ENCODE measurements at regions of chr6 and their contacts with region 1.

Region 1: GRCh38 chr6:30212865-30213666 is at the start of gene TRIM26:
- DNase-seq: peak; percentile 99
- ATAC-seq: peak; percentile 87
- H3K4me3 ChIP-seq: peak within 1 kb of the TSS; percentile 93 to 100 (median 98)
- H3K4me3 Mint-ChIP-seq: peak within 1 kb of the TSS; percentile 90
- H3K27ac ChIP-seq: peak within 1 kb of the TSS; percentile 98 to 100
- H3K27ac Mint-ChIP-seq: peak within 1 kb of the TSS; percentile 100
- H3K4me1 ChIP-seq: peaks cover 40 to 47% of the 10 kb centered on the region in 2 donors
- H3K4me1 Mint-ChIP-seq: peaks cover 59% of the 10 kb centered on the region
- H3K27me3 ChIP-seq: no peaks in the 10 kb centered on the region
- H3K27me3 Mint-ChIP-seq: no peaks in the 10 kb centered on the region
- CTCF ChIP-seq: no peak
- total RNA-seq, gene TRIM26: 65.3 and 73.2 TPM in 2 replicates

Region 2: GRCh38 chr6:30066577-30067459 is 146.2 kb before region 1 on chr6 and contains the start of gene PPP1R11:
- CTCF ChIA-PET with region 1: no interaction called
- POLR2A ChIA-PET with region 1: interaction called, 5 read pairs
- intact Hi-C with region 1: loop called (anchors 2 kb)
- DNase-seq: peak; percentile 100
- ATAC-seq: peak; percentile 97
- H3K4me3 ChIP-seq: peak within 1 kb of the TSS; percentile 80 to 95 (median 85)
- H3K4me3 Mint-ChIP-seq: peak within 1 kb of the TSS; percentile 93
- H3K27ac ChIP-seq: peak within 1 kb of the TSS; percentile 93 to 97
- H3K27ac Mint-ChIP-seq: peak within 1 kb of the TSS; percentile 99
- H3K4me1 ChIP-seq: peaks cover 42 to 45% of the 10 kb centered on the region in 2 donors
- H3K4me1 Mint-ChIP-seq: peaks cover 51% of the 10 kb centered on the region
- H3K27me3 ChIP-seq: peaks cover 0 to 20% (median 9%) of the 10 kb centered on the region in 4 experiments
- H3K27me3 Mint-ChIP-seq: peaks cover 17% of the 10 kb centered on the region
- CTCF ChIP-seq: no peak
- total RNA-seq, gene PPP1R11: 44.8 and 49.5 TPM in 2 replicates

Region 3: GRCh38 chr6:30200551-30201281 is 12.3 kb before region 1 on chr6:
- CTCF ChIA-PET with region 1: interaction called, 3 read pairs
- POLR2A ChIA-PET with region 1: interaction called, 4 read pairs
- intact Hi-C with region 1: loop called (anchors 1 kb)
- DNase-seq: peak; percentile 79
- ATAC-seq: peak; percentile 88
- H3K4me3 ChIP-seq: peak overlapping the region in 1 of 5 experiments; percentile 3
- H3K4me3 Mint-ChIP-seq: peak overlapping the region; percentile 35
- H3K27ac ChIP-seq: peak overlapping the region; percentile 48 to 76
- H3K27ac Mint-ChIP-seq: peak overlapping the region; percentile 76
- H3K4me1 ChIP-seq: peaks cover 23 to 31% of the 10 kb centered on the region in 2 donors
- H3K4me1 Mint-ChIP-seq: peaks cover 38% of the 10 kb centered on the region
- H3K27me3 ChIP-seq: no peaks in the 10 kb centered on the region
- H3K27me3 Mint-ChIP-seq: no peaks in the 10 kb centered on the region
- CTCF ChIP-seq: no peak

Region 4: GRCh38 chr6:30259140-30260035 is 46.3 kb after region 1 on chr6:
- CTCF ChIA-PET with region 1: no interaction called
- POLR2A ChIA-PET with region 1: interaction called, 5 read pairs
- intact Hi-C with region 1: loop called (anchors 2 kb)
- DNase-seq: peak; percentile 94
- ATAC-seq: peak; percentile 96
- H3K4me3 ChIP-seq: peak overlapping the region; percentile 25 to 100 (median 84)
- H3K4me3 Mint-ChIP-seq: peak overlapping the region; percentile 99
- H3K27ac ChIP-seq: peak overlapping the region; percentile 93 to 98
- H3K27ac Mint-ChIP-seq: peak overlapping the region; percentile 98
- H3K4me1 ChIP-seq: peaks cover 19 to 27% of the 10 kb centered on the region in 2 donors
- H3K4me1 Mint-ChIP-seq: peaks cover 32% of the 10 kb centered on the region
- H3K27me3 ChIP-seq: no peaks in the 10 kb centered on the region
- H3K27me3 Mint-ChIP-seq: no peaks in the 10 kb centered on the region
- CTCF ChIP-seq: peak; percentile 41

Region 5: GRCh38 chr6:30326526-30327260 is 113.6 kb after region 1 on chr6 and contains the start of gene TRIM39:
- CTCF ChIA-PET with region 1: no interaction called
- POLR2A ChIA-PET with region 1: interaction called, 5 read pairs
- intact Hi-C with region 1: loop called (anchors 1 kb)
- DNase-seq: peak; percentile 96
- ATAC-seq: peak; percentile 69
- H3K4me3 ChIP-seq: peak within 1 kb of the TSS; percentile 72 to 97 (median 90)
- H3K4me3 Mint-ChIP-seq: peak within 1 kb of the TSS; percentile 99
- H3K27ac ChIP-seq: peak within 1 kb of the TSS; percentile 98 to 99
- H3K27ac Mint-ChIP-seq: peak within 1 kb of the TSS; percentile 99
- H3K4me1 ChIP-seq: peaks cover 21 to 31% of the 10 kb centered on the region in 2 donors
- H3K4me1 Mint-ChIP-seq: peaks cover 52% of the 10 kb centered on the region
- H3K27me3 ChIP-seq: no peaks in the 10 kb centered on the region
- H3K27me3 Mint-ChIP-seq: no peaks in the 10 kb centered on the region
- CTCF ChIP-seq: no peak
- total RNA-seq, gene TRIM39: 28.2 and 31.4 TPM in 2 replicates

Region 6: GRCh38 chr6:30344868-30345671 is 132.0 kb after region 1 on chr6 and contains the start of gene RPP21:
- CTCF ChIA-PET with region 1: no interaction called
- POLR2A ChIA-PET with region 1: no interaction called
- intact Hi-C with region 1: loop called (anchors 1 kb)
- DNase-seq: peak; percentile 91
- ATAC-seq: peak; percentile 99
- H3K4me3 ChIP-seq: peak within 1 kb of the TSS; percentile 46 to 98 (median 85)
- H3K4me3 Mint-ChIP-seq: peak within 1 kb of the TSS; percentile 97
- H3K27ac ChIP-seq: peak within 1 kb of the TSS; percentile 75 to 91
- H3K27ac Mint-ChIP-seq: peak within 1 kb of the TSS; percentile 98
- H3K4me1 ChIP-seq: peaks cover 24 to 30% of the 10 kb centered on the region in 2 donors
- H3K4me1 Mint-ChIP-seq: peaks cover 40% of the 10 kb centered on the region
- H3K27me3 ChIP-seq: no peaks in the 10 kb centered on the region
- H3K27me3 Mint-ChIP-seq: no peaks in the 10 kb centered on the region
- CTCF ChIP-seq: no peak
- total RNA-seq, gene RPP21: 48.1 and 50.6 TPM in 2 replicates

Region 7: GRCh38 chr6:31652925-31653718 is 1440.1 kb after region 1 on chr6:
- CTCF ChIA-PET with region 1: no interaction called
- POLR2A ChIA-PET with region 1: no interaction called
- intact Hi-C with region 1: loop called (anchors 10 kb)
- DNase-seq: no peak
- ATAC-seq: peak; percentile 69
- H3K4me3 ChIP-seq: peak overlapping the region; percentile 66 to 96 (median 86)
- H3K4me3 Mint-ChIP-seq: peak overlapping the region; percentile 98
- H3K27ac ChIP-seq: peak overlapping the region; percentile 97 to 98
- H3K27ac Mint-ChIP-seq: peak overlapping the region; percentile 100
- H3K4me1 ChIP-seq: peaks cover 22 to 29% of the 10 kb centered on the region in 2 donors
- H3K4me1 Mint-ChIP-seq: peaks cover 48% of the 10 kb centered on the region
- H3K27me3 ChIP-seq: no peaks in the 10 kb centered on the region
- H3K27me3 Mint-ChIP-seq: no peaks in the 10 kb centered on the region
- CTCF ChIP-seq: no peak

Region 8: DNA sequence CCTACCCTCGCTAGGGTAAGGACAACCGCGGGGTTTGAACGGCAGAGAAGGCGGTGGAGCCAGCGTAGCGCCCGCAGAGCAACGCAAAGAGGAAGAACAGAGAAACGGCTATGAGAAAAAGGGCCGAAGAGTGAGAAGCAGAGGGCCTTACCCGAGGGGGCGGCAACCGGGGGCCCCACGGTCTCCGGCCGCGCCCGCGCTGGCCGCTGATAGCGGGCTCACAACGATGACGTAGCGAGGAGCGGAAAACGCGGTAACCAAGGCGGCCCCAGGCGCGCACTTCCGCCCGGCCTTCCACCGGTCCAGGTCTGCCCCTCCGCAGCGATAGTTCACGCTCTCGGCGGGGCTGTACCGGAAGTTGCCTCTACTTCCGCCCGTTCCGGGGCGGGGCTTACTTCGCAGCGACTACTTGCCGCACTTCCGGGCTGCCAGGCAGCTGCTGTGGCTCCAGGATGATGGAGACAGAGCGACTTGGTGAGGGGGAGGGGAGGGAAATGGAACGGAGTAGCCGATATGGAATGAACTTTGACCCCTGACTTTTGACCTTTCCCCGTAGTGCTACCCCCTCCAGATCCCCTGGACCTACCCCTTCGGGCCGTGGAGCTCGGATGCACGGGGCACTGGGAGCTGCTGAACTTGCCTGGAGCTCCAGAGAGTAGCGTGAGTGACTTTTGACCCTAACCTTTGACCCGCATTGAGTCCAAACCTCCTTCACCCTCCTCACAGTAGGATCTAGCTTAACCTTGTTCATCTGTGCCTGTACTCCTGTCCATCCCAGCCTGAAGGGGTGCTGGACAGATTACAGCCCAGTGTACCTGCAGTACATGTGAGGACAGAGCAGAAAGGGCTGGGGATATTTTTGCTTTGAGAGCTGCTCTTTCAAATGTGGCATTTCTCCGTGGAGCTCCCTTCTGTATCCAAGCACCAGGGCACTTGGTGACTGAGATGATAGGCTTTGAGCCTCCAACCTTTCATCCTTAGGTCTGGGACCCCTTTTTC is 1746.0 kb after region 1 on chr6 and contains the starts of genes NELFE and SKIC2:
- CTCF ChIA-PET with region 1: no interaction called
- POLR2A ChIA-PET with region 1: no interaction called
- intact Hi-C with region 1: no loop called
- DNase-seq: peak; percentile 99
- ATAC-seq: peak; percentile 98
- H3K4me3 ChIP-seq: peak within 1 kb of the TSS; percentile 88 to 98 (median 91)
- H3K4me3 Mint-ChIP-seq: peak within 1 kb of the TSS; percentile 96
- H3K27ac ChIP-seq: peak within 1 kb of the TSS; percentile 84 to 91
- H3K27ac Mint-ChIP-seq: peak within 1 kb of the TSS; percentile 96
- H3K4me1 ChIP-seq: peaks cover 16 to 23% of the 10 kb centered on the region in 2 donors
- H3K4me1 Mint-ChIP-seq: peaks cover 30% of the 10 kb centered on the region
- H3K27me3 ChIP-seq: no peaks in the 10 kb centered on the region
- H3K27me3 Mint-ChIP-seq: no peaks in the 10 kb centered on the region
- CTCF ChIP-seq: no peak
- total RNA-seq, gene NELFE: 48.6 and 53.7 TPM in 2 replicates
- total RNA-seq, gene SKIC2: 119 and 122 TPM in 2 replicates

Measured in B cell (primary cell).